Activated CD8-positive, alpha-beta memory T cell treated with anti-CD3 and anti-CD28 coated beads, Interleukin-2, amount 10 ng/mL, durations not matched to agents 7 days and 5 days (primary cell): ENCODE measurements at regions of chr17 and their contacts with region 1.

Region 1: GRCh38 chr17:35889818-35890763 is 9.9 kb upstream of the CCL5 start:
- DNase-seq: no peak
- ATAC-seq: peak; percentile 22
- H3K4me3 Mint-ChIP-seq: peak overlapping the region; percentile 48
- H3K27ac Mint-ChIP-seq: peak overlapping the region; percentile 90
- H3K4me1 Mint-ChIP-seq: peaks cover 78% of the 10 kb centered on the region
- H3K27me3 Mint-ChIP-seq: no peaks in the 10 kb centered on the region

Region 2: DNA sequence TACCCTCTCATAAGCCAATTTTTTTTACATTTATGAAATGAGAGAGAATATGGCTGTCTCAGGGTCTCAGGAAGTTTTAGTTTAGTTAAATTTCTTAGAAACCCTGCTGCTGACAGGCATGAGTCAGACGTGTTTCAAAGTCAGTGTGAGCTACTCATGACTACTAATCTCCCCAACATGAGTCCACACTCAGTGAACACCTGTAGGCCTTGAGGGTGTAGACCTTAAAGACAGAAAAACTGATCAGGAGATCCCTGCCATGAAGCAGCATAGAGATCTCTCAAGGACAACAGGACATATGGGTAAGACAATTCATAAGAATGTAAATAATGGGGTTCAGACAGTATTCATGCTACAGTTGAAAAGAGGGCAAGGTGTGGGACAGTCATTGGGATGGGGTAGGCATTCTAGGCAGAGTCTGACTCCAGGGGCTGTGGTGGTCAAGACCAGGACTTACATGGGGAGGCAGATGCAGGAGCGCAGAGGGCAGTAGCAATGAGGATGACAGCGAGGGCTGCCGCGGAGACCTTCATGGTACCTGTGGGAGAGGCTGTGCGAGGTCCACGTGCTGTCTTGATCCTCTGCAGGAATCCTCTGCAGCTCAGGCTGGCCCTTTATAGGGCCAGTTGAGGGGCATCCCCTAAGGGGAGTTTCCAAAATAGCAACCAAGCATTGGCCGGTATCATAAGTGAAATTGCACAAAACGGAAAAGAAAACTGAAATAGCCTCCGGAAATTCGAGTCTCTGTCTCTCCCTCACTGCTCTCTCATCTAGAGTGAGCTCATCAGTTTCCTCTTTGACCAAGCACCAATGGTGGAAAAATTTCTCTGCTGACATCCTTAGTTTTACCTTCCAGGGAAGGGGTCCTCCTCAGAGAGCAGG is 10.1 kb before region 1 on chr17 and contains the start of gene CCL5:
- CTCF ChIA-PET with region 1: interaction called, 254 read pairs
- DNase-seq: peak; percentile 94
- ATAC-seq: peak; percentile 82
- H3K4me3 Mint-ChIP-seq: peak within 1 kb of the TSS; percentile 99
- H3K27ac Mint-ChIP-seq: peak within 1 kb of the TSS; percentile 99
- H3K4me1 Mint-ChIP-seq: peaks cover 60% of the 10 kb centered on the region
- H3K27me3 Mint-ChIP-seq: no peaks in the 10 kb centered on the region
- total RNA-seq, gene CCL5: 973 to 1,249 TPM

Region 3: DNA sequence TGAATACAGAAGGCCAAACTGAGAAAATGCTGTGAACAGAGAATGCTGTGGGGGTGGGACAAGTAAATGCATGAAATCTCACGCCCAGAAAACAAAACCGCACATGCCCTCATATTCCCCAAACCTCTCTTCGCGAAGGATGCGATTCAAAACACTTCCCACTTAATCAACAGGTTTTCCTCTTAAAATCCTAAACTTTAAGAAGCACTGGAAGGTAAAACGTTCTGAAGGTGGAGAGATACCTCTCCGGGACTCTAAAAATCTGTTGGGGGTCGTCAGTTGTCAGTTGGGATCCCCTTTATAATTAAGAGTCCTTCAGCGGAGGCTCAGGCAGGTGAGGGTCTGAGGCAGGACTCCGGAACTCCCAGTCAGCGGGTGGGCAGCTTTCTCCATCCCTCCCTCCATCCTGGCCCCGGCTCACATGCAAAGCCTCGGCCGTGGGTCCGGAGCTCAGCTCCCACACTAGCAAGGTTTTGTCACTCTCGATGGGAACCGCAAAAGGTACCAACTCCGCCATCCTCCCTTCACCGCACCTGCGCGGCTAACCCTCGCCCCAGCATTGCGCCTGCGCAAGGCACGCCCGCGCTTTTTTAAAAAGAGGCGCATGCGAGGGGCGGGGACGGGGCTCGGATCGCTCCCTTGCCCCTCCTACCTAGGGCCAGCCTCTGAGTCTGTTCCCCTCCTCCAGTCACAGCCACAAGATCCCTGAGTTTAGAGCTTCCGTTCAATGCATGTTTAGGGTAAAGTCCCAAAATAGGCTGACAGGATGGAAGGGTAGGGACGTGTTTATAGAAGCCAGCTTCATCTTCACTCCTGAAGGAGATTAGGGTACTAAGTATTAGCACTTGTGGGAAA is 40.3 kb after region 1 on chr17 and contains the start of gene RDM1:
- CTCF ChIA-PET with region 1: interaction called, 18 read pairs
- DNase-seq: peak; percentile 95
- ATAC-seq: peak; percentile 97
- H3K4me3 Mint-ChIP-seq: peak within 1 kb of the TSS; percentile 88
- H3K27ac Mint-ChIP-seq: peak within 1 kb of the TSS; percentile 82
- H3K4me1 Mint-ChIP-seq: peaks cover 41% of the 10 kb centered on the region
- H3K27me3 Mint-ChIP-seq: no peaks in the 10 kb centered on the region
- total RNA-seq, gene RDM1: 13.5 to 18.5 TPM